MCF 10A (cell line): ENCODE measurements at regions of chr6 and their contacts with region 1.

Region 1: GRCh38 chr6:74749211-74750142 is 456.4 kb downstream of the COL12A1 start:
- DNase-seq: peak; percentile 77
- H3K4me3 Mint-ChIP-seq: peak overlapping the region; percentile 61
- H3K27ac Mint-ChIP-seq: peak overlapping the region; percentile 90
- H3K4me1 Mint-ChIP-seq: peaks cover 47% of the 10 kb centered on the region
- H3K27me3 Mint-ChIP-seq: no peaks in the 10 kb centered on the region
- CTCF ChIP-seq: no peak

Region 2: DNA sequence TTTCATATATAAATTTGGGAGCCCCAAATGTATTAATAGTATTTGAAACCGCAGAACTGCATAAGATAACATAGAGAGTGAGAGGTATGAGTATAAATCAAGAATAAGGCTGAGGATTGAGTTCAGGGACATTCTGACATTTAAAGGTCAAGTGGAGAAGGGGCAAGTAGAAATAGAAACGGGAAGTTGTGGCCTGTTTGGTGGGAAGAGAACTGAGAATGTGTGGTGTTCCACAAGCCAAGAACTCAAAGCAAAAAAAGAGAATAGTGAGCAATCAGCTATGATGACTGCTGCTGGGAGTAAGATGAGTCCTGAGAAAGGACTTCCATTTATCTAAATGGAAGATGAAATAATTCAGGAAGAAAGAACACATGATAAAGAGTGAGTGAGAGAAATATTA is 635.0 kb before region 1 on chr6:
- CTCF ChIA-PET with region 1: no interaction called
- POLR2A ChIA-PET with region 1: no interaction called
- intact Hi-C with region 1: no loop called
- DNase-seq: no peak
- H3K4me3 Mint-ChIP-seq: no peak overlapping the region
- H3K27ac Mint-ChIP-seq: no peak overlapping the region
- H3K4me1 Mint-ChIP-seq: peaks cover 19% of the 10 kb centered on the region
- H3K27me3 Mint-ChIP-seq: no peaks in the 10 kb centered on the region
- CTCF ChIP-seq: no peak

Region 3: DNA sequence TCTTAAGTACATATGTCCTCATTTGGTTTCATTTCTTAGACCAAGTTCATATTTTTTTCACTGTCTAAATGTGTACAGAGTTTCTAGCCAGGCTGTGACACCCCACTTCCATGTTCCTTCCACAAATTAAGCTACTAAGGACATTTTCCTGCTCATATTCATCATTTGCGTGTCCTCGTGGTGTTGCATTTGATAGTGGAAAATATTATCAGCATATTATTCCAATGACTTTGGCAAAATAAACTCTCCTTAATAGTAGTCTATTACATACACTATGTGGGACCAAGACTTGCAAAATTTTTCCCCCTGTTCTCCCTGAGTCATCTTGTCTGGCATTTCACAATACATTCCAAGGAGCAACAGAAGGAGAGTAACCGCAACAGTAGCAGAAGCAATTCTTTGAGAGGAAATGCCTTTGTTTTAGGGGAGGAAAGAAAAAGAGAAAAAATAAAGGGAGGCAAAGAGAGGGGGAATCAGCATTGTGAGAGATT is 142.9 kb before region 1 on chr6:
- CTCF ChIA-PET with region 1: no interaction called
- POLR2A ChIA-PET with region 1: interaction called, 12 read pairs
- intact Hi-C with region 1: no loop called
- DNase-seq: peak; percentile 94
- H3K4me3 Mint-ChIP-seq: peak overlapping the region; percentile 15
- H3K27ac Mint-ChIP-seq: peak overlapping the region; percentile 67
- H3K4me1 Mint-ChIP-seq: peaks cover 39% of the 10 kb centered on the region
- H3K27me3 Mint-ChIP-seq: no peaks in the 10 kb centered on the region
- CTCF ChIP-seq: no peak

Region 4: DNA sequence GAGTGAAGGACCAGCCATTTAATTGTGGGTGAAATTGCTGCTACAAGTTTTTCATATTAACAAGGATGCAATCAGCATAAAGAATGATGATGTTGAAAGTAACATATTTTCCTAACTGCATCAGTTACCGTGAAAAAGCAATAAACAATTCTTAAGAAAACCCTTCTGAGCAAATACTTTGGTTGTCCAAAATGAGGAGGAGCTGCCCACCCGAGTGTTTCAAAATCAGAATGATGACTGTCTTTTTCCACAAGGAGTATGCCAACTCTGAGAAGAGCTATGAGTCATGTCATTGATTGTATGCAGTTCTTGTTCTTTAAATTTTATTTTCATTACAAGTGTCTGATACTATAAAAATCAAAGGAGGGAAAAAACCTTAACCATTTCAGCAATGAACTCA is 14.2 kb before region 1 on chr6:
- CTCF ChIA-PET with region 1: no interaction called
- POLR2A ChIA-PET with region 1: interaction called, 15 read pairs
- intact Hi-C with region 1: no loop called
- DNase-seq: peak; percentile 89
- H3K4me3 Mint-ChIP-seq: no peak overlapping the region
- H3K27ac Mint-ChIP-seq: peak overlapping the region; percentile 74
- H3K4me1 Mint-ChIP-seq: peaks cover 28% of the 10 kb centered on the region
- H3K27me3 Mint-ChIP-seq: no peaks in the 10 kb centered on the region
- CTCF ChIP-seq: no peak

Region 5: GRCh38 chr6:74805916-74806696 is 56.6 kb after region 1 on chr6:
- CTCF ChIA-PET with region 1: no interaction called
- POLR2A ChIA-PET with region 1: no interaction called
- intact Hi-C with region 1: no loop called
- DNase-seq: no peak
- H3K4me3 Mint-ChIP-seq: no peak overlapping the region
- H3K27ac Mint-ChIP-seq: no peak overlapping the region
- H3K4me1 Mint-ChIP-seq: peaks cover 10% of the 10 kb centered on the region
- H3K27me3 Mint-ChIP-seq: no peaks in the 10 kb centered on the region
- CTCF ChIP-seq: no peak

Region 6: DNA sequence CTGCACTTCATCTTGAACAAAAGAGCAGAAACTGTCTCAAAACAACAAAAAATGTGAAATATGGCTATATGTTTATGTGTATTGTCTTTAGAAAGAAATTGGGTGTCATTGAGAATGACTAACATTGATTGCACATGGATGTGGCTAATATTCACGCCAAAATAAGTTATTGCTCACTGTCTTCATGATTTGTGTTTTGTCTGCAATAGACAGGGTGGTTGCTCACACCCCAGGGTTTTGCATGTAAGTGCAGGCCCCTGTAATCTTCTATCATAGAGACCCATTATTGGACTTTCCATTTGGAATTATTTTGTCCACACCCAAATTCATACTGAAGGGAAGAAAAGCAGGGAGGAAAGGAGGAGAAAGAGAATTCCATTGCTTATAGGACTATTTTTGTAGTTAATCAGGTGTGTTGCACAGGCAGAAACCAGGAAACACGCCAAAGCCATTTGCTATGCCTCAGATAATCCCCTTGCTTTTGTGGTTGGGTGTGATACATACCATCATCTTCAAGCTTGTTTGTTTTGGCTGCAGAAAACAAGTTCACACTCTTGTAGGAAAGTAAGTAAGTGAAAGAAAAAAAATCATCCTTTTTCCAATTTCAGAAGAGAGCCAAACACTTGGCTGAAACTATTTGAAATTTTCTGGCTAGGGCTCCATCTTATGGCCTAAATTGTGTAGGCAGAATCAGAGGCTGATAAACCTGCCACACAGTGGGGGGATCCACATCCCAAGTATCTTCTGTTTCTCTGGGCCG is 242.3 kb after region 1 on chr6:
- CTCF ChIA-PET with region 1: no interaction called
- POLR2A ChIA-PET with region 1: interaction called, 3 read pairs
- intact Hi-C with region 1: loop called (anchors 1 kb)
- DNase-seq: peak; percentile 73
- H3K4me3 Mint-ChIP-seq: no peak overlapping the region
- H3K27ac Mint-ChIP-seq: peak overlapping the region; percentile 32
- H3K4me1 Mint-ChIP-seq: peaks cover 27% of the 10 kb centered on the region
- H3K27me3 Mint-ChIP-seq: no peaks in the 10 kb centered on the region
- CTCF ChIP-seq: peak; percentile 33